ENCODE measurements at regions of chr1 and their contacts with region 1.

Region 1: GRCh38 chr1:28088168-28088961 is at the start of gene EYA3:
- DNase-seq: peak; percentile 98
- H3K4me3 Mint-ChIP-seq: peak within 1 kb of the TSS; percentile 97
- H3K27ac Mint-ChIP-seq: peak within 1 kb of the TSS; percentile 98
- H3K4me1 Mint-ChIP-seq: peaks cover 26% of the 10 kb centered on the region
- H3K27me3 Mint-ChIP-seq: no peaks in the 10 kb centered on the region
- CTCF ChIP-seq: no peak
- total RNA-seq, gene EYA3: 13.3 and 14.4 TPM in 2 replicates

Region 2: DNA sequence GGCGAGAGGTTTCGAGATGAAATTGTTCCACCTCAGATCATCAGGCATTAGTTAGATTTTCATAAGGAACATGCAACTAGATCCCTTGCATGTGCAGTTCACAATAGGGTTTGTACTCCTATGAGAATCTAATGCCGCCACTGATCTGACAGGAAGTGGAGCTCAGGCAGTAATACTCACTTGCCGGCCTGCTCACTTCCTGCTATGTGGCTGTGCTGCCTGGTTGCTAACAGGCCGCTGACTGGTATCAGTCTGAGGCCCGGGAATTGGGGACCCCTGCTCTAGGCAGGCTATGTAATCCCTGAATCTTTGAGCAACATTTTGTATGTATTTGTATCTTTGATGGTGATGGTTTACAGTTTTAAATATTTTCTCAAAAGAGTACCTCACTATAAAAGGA is 96.1 kb before region 1 on chr1:
- CTCF ChIA-PET with region 1: no interaction called
- POLR2A ChIA-PET with region 1: no interaction called
- intact Hi-C with region 1: no loop called
- DNase-seq: no peak
- H3K4me3 Mint-ChIP-seq: no peak overlapping the region
- H3K27ac Mint-ChIP-seq: no peak overlapping the region
- H3K4me1 Mint-ChIP-seq: no peaks in the 10 kb centered on the region
- H3K27me3 Mint-ChIP-seq: no peaks in the 10 kb centered on the region
- CTCF ChIP-seq: no peak

Region 3: GRCh38 chr1:28036431-28036830 is 51.9 kb before region 1 on chr1:
- CTCF ChIA-PET with region 1: no interaction called
- POLR2A ChIA-PET with region 1: no interaction called
- intact Hi-C with region 1: loop called (anchors 2 kb)
- DNase-seq: peak; percentile 13
- H3K4me3 Mint-ChIP-seq: no peak overlapping the region
- H3K27ac Mint-ChIP-seq: peak overlapping the region; percentile 70
- H3K4me1 Mint-ChIP-seq: no peaks in the 10 kb centered on the region
- H3K27me3 Mint-ChIP-seq: no peaks in the 10 kb centered on the region
- CTCF ChIP-seq: no peak

Region 4: DNA sequence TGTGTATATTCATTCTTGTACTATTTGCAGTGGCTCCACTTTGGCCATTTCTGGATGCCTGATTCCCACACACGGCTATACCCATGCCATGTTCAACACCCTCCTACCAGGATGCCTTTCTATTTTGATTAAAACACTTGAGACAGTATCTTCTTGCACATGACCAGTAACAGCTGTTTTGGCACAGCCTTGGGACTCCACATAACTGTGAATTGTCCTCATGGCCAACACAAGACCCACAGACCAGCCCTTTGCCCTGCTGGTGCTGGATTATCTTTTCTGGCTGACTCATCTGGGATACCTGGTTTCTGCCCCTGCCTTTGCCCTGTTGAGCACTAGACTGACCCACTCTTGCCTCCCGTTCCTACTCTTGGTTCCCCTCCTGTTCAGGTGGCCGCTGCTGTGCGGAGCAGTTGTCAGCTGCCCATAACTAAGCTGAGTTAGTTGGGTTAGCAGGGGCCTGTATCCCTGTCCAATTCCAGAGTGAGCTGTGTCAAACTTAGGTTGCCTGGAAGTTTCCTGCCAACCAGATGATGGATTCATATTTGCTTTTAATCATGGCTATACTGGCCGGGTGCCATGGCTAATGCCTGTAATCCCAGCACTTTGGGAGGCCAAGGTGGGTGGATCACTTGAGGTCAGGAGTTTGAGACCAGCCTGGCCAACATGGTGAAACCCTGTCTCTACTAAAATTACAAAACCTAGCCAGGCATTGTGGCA is 10.8 kb after region 1 on chr1:
- CTCF ChIA-PET with region 1: interaction called, 14 read pairs
- POLR2A ChIA-PET with region 1: interaction called, 6 read pairs
- intact Hi-C with region 1: no loop called
- DNase-seq: no peak
- H3K4me3 Mint-ChIP-seq: no peak overlapping the region
- H3K27ac Mint-ChIP-seq: no peak overlapping the region
- H3K4me1 Mint-ChIP-seq: no peaks in the 10 kb centered on the region
- H3K27me3 Mint-ChIP-seq: peaks cover 10% of the 10 kb centered on the region
- CTCF ChIP-seq: no peak

Region 5: GRCh38 chr1:28127617-28128257 is 39.4 kb after region 1 on chr1:
- CTCF ChIA-PET with region 1: interaction called, 8 read pairs
- POLR2A ChIA-PET with region 1: interaction called, 3 read pairs
- intact Hi-C with region 1: loop called (anchors 2 kb)
- DNase-seq: no peak
- H3K4me3 Mint-ChIP-seq: no peak overlapping the region
- H3K27ac Mint-ChIP-seq: no peak overlapping the region
- H3K4me1 Mint-ChIP-seq: peaks cover 15% of the 10 kb centered on the region
- H3K27me3 Mint-ChIP-seq: no peaks in the 10 kb centered on the region
- CTCF ChIP-seq: no peak

Region 6: GRCh38 chr1:28208818-28209441 is 120.6 kb after region 1 on chr1:
- CTCF ChIA-PET with region 1: interaction called, 123 read pairs
- POLR2A ChIA-PET with region 1: interaction called, 26 read pairs
- intact Hi-C with region 1: loop called (anchors 1 kb)
- DNase-seq: peak; percentile 78
- H3K4me3 Mint-ChIP-seq: no peak overlapping the region
- H3K27ac Mint-ChIP-seq: no peak overlapping the region
- H3K4me1 Mint-ChIP-seq: peaks cover 9% of the 10 kb centered on the region
- H3K27me3 Mint-ChIP-seq: no peaks in the 10 kb centered on the region
- CTCF ChIP-seq: peak; percentile 80

Measured in MCF 10A (cell line).